Transverse colon (tissue), 4 donors: ENCODE measurements at regions of chr20 and their contacts with region 1.

Region 1: DNA sequence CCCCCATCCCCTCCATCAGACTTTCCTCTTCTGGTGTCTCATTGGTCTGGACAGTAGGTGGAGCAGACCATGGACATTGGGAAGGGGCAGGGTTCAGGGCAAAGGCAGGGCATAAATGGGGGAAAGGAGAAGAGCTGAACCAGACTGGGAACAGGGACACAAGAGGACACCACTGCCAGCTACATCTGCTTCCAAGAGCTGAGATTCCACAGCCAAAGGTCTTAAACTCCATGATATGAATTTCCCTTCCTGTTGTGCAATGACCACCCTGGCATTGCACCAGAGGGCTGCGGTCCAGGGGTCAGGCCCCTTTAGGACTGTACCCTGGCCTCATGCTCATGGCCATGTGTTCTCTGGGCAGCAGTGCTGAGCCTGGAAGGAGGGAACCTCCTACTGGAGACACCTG is 137.9 kb downstream of the MAFB start:
- DNase-seq: no peak
- H3K4me3 ChIP-seq: no peak overlapping the region
- H3K27ac ChIP-seq: no peak overlapping the region
- H3K4me1 ChIP-seq: no peaks in the 10 kb centered on the region
- H3K27me3 ChIP-seq: no peaks in the 10 kb centered on the region
- CTCF ChIP-seq: no peak
- EP300 ChIP-seq: no peak
- POLR2A ChIP-seq: no peak

Region 2: DNA sequence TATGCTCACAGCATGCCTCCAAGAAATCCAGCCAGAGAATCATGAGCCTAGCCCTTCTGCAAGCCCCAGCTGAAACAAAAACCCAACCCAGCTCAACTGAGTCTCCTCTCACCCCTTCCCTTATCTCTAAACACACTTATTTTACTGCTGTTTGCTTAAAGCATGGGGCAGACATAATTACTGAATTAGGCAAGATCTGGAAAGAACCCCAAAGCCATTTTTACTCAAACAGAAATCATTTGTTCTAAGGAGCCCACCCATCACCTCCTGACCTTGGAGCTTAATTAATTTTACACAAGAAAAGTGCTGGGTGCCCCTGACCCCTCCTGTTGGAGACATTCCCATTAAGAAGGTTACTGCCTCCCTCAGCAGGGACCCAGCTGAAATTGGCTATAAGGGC is 153.6 kb before region 1 on chr20:
- in situ Hi-C with region 1: no loop called
- intact Hi-C with region 1: loop called (anchors 5 kb)
- DNase-seq: no peak
- H3K4me3 ChIP-seq: no peak overlapping the region
- H3K27ac ChIP-seq: no peak overlapping the region
- H3K4me1 ChIP-seq: peaks cover 0 to 22% (median 2%) of the 10 kb centered on the region in 4 donors
- H3K27me3 ChIP-seq: no peaks in the 10 kb centered on the region
- CTCF ChIP-seq: no peak
- EP300 ChIP-seq: no peak
- POLR2A ChIP-seq: no peak

Region 3: GRCh38 chr20:40663991-40664880 is 113.1 kb after region 1 on chr20:
- in situ Hi-C with region 1: no loop called
- intact Hi-C with region 1: no loop called
- DNase-seq: no peak
- H3K4me3 ChIP-seq: no peak overlapping the region
- H3K27ac ChIP-seq: no peak overlapping the region
- H3K4me1 ChIP-seq: no peaks in the 10 kb centered on the region
- H3K27me3 ChIP-seq: no peaks in the 10 kb centered on the region
- CTCF ChIP-seq: no peak
- EP300 ChIP-seq: no peak
- POLR2A ChIP-seq: no peak